ENCODE measurements at regions of chr7 and their contacts with region 1.

Region 1: DNA sequence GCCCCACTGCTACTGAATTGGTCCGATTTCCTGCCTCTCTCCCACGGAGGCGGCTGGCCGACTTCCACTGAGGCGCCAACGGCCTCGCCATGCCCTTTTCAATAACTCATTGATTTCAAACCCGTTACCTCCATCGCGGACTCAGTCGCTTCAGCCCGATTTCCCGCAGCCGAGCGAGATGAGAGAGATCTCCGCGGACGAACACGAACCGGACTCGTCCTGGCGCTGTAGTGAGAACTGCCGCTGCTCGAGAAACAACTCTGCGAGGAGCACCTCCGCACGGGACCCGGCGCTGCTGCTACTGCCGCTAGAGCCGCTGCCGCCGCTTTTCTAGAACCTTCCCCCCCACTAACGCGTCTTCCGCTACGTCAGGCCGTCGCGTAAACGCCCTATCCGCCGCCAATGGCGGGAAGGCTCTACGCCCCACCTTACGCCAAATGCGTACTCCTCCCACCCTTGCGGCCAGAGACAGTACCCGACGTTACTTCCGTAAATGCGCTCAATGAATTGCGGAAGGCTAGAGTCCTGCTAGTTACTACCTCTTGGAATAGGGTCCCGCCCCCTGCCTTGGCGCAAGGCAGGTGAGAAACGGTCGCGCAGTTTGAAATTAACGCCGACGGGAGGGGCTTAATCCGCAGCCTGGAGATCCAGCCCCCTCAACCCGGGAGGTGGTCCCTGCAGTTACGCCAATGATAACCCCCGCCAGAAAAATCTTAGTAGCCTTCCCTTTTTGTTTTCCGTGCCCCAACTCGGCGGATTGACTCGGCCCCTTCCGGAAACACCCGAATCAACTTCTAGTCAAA is at the start of gene HNRNPA2B1:
- DNase-seq: peak; percentile 99
- ATAC-seq: peak; percentile 72
- H3K4me3 Mint-ChIP-seq: peak within 1 kb of the TSS; percentile 100
- H3K27ac Mint-ChIP-seq: peak within 1 kb of the TSS; percentile 100
- H3K4me1 Mint-ChIP-seq: peaks cover 35% of the 10 kb centered on the region
- H3K27me3 Mint-ChIP-seq: no peaks in the 10 kb centered on the region
- total RNA-seq, gene HNRNPA2B1: 882 to 899 TPM

Region 2: GRCh38 chr7:25894902-25895791 is 305.5 kb before region 1 on chr7:
- CTCF ChIA-PET with region 1: interaction called, 18 read pairs
- POLR2A ChIA-PET with region 1: interaction called, 9 read pairs
- DNase-seq: peak; percentile 65
- ATAC-seq: peak; percentile 77
- H3K4me3 Mint-ChIP-seq: peak overlapping the region; percentile 24
- H3K27ac Mint-ChIP-seq: no peak overlapping the region
- H3K4me1 Mint-ChIP-seq: peaks cover 35% of the 10 kb centered on the region
- H3K27me3 Mint-ChIP-seq: peaks cover 26% of the 10 kb centered on the region

Region 3: DNA sequence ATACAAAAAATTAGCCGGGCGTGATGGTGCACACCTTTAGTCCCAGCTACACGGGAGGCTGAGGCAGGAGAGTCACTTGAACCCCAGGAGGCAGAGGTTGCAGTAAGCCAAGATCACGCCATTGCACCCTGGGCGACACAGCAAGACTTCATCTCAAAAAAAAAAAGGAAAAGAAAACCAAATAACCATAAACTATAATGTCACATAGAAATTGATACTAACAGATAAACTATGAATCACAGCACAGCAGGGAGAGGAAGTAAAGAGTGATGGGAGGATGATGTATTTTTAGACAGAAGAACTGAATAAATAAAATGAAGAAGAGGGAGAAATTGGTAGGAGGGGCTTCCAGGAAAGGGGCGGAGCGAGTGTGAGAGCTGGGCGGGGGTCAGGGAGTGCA is 138.4 kb before region 1 on chr7:
- CTCF ChIA-PET with region 1: no interaction called
- POLR2A ChIA-PET with region 1: no interaction called
- DNase-seq: no peak
- ATAC-seq: no peak
- H3K4me3 Mint-ChIP-seq: no peak overlapping the region
- H3K27ac Mint-ChIP-seq: no peak overlapping the region
- H3K4me1 Mint-ChIP-seq: peaks cover 13% of the 10 kb centered on the region
- H3K27me3 Mint-ChIP-seq: peaks cover 19% of the 10 kb centered on the region

Region 4: DNA sequence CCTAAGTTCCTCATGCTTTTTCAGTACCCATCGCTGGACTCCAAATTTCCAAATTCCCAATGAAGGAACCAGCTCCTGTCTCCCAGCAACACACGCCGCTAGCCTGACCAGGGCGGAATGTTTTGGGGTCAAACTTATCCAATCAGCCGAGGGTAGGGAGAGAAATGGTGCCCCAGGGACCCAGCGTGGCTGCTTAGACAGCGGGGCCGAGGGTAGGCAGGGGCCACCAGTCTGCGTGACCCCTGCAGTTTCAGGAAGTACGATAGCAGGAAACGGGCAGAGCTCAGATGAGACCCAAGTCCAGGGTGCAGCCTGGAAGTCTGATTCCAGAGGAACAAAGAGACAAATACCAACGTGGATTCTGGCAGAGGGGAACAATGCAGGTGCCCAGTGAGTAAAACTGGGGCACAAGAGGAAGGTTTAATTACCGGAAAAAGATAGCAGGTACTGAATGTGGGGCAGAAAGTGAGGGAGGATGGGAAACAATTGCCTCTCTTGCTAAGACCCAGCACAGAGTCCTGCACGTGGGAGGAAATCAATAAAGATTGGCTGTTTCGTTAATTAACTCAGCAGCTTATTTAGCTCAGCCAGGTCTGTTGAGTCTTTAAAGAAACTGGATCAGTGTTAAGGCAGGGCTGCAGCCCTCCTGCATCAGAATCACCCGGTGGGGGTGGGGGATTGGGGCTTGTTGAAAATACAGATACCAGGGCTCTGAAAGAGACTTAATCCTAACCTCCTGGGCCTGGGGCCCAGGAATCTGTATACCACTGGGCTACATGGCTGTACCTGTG is 99.1 kb before region 1 on chr7:
- CTCF ChIA-PET with region 1: interaction called, 5 read pairs
- POLR2A ChIA-PET with region 1: interaction called, 10 read pairs
- DNase-seq: no peak
- ATAC-seq: no peak
- H3K4me3 Mint-ChIP-seq: peak overlapping the region; percentile 40
- H3K27ac Mint-ChIP-seq: peak overlapping the region; percentile 78
- H3K4me1 Mint-ChIP-seq: peaks cover 39% of the 10 kb centered on the region
- H3K27me3 Mint-ChIP-seq: no peaks in the 10 kb centered on the region

Region 5: DNA sequence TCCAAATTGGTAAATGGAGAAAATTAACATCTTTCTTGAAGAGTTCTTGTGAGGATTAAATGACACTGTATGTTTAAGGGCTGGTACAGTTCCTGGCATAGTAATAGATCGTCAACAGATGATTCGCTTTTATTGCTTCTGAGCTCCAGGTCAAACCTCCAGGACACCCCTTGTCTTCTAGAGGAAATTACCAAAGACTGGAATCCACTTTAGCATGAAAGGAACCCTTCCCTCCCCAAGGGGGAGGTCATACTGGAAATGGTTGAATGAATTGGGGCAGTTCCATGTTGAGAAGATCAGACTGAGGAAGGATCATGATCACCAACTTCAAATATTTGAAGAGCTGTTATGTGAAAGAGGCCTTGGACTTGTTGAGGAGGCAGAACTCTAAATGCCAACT is 39.8 kb before region 1 on chr7:
- CTCF ChIA-PET with region 1: interaction called, 4 read pairs
- POLR2A ChIA-PET with region 1: interaction called, 148 read pairs
- DNase-seq: no peak
- ATAC-seq: no peak
- H3K4me3 Mint-ChIP-seq: no peak overlapping the region
- H3K27ac Mint-ChIP-seq: no peak overlapping the region
- H3K4me1 Mint-ChIP-seq: peaks cover 54% of the 10 kb centered on the region
- H3K27me3 Mint-ChIP-seq: no peaks in the 10 kb centered on the region

Region 6: DNA sequence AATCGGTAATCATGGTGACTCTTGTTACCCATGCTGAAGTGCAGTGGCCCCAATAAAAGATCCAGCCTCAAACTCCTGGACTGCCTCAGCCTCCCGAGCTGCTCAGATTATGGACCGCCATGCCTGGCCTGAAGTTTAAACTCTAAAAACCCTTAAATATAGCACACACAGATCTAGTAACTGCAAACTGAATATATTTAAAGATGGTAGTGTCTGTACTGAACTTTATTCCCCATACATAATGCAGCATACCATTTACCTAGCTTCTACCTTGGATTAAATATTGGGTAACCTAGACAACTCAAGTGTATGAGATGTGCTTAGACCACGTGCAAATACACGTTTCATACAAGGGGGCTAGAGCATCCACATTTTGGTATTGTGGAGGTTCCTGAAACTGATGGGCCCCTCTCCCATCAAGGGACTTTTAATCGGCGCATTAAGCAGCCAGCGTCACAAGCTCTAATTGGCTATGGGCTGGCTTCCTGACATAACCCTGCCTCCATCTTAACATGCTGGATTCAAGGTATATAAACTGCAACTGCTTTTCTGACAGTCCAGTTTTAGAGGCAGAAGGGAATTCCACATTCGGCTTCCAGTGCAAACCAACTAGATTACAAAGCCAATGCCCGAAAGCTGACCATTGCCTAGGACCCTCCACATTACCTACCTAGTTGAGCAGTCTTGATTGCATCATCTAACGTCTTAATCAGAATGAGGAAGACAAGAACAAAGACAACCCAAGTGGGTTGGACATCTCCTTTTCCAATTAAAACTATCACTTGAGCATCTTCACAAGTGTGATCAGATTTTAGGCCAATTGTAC is 13.1 kb before region 1 on chr7:
- CTCF ChIA-PET with region 1: interaction called, 32 read pairs
- POLR2A ChIA-PET with region 1: interaction called, 180 read pairs
- DNase-seq: no peak
- ATAC-seq: peak; percentile 13
- H3K4me3 Mint-ChIP-seq: peak overlapping the region; percentile 6
- H3K27ac Mint-ChIP-seq: peak overlapping the region; percentile 67
- H3K4me1 Mint-ChIP-seq: peaks cover 71% of the 10 kb centered on the region
- H3K27me3 Mint-ChIP-seq: no peaks in the 10 kb centered on the region

Region 7: DNA sequence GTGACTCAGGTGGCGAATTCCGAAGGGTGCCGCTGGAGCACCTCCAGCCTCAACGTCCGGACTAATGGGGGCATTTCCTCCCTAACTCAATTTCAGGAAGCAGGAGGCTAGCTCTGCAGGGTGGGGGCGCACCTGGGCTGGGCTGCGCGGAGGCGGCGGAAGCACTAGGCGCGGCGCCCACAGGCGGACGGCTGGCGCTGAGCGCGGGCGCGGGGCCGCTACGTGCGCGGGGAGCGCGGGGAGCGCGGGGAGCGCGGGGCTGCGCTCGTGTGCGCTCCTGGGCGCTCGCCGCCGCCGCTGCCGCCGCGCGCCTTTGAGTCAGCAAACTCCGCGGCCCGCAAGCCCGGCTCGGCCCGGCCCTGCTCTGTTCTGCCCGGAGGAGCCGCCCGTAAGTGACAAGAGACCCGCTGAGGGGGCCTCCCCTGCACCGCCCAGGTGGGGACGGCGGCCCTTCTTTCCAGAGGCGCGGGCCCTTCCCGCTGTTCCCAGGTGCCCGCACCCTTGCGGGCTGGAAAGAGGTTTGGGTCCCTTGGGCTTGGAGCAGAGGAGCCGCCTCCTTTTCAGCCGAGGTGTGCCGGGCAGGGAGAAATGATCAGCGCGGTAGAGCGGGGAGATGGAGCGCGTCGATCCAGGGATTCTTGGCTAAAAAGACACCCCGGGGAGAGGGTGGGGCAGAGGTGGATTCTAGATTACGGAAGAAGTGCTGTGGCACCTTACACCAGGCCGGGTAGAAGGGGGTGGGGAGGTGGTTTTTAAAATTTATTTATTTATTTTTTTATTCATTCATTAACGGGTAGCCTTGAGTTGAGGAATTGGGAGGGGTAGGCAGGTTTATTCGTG is 91.3 kb after region 1 on chr7 and contains the start of gene SNX10:
- CTCF ChIA-PET with region 1: interaction called, 6 read pairs
- POLR2A ChIA-PET with region 1: interaction called, 53 read pairs
- DNase-seq: peak; percentile 82
- ATAC-seq: peak; percentile 80
- H3K4me3 Mint-ChIP-seq: peak within 1 kb of the TSS; percentile 94
- H3K27ac Mint-ChIP-seq: peak within 1 kb of the TSS; percentile 92
- H3K4me1 Mint-ChIP-seq: peaks cover 38% of the 10 kb centered on the region
- H3K27me3 Mint-ChIP-seq: peaks cover 6% of the 10 kb centered on the region
- total RNA-seq, gene SNX10: 39.2 to 42.7 TPM

Measured in activated CD8-positive, alpha-beta T cell treated with anti-CD3 and anti-CD28 coated beads, Interleukin-2, amount 10 ng/mL, durations not matched to agents 7 days and 5 days (primary cell).